Right lobe of liver (tissue), 6 donors: ENCODE measurements at regions of chr4 and their contacts with region 1.

Region 1: DNA sequence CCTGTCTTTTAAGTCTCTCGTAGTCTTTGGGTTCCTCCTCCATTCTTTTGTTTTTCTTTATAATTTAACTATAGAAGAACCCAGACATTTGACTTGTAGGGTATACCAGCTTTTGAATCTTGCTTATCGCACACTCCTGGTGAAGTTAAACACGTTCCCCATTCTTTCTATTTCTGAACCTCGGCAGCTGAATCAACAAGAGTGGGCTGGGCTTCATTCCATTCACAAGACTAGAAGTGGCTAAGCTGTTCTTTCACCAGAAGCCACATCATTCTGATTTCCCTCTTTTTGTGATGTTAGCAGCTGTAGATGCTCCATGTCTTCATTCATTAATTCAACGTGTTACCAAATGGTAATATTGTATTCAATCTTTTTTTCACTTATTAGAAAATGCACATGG is 167.9 kb downstream of the CORIN start:
- DNase-seq: no peak
- ATAC-seq: no peak
- H3K4me3 ChIP-seq: no peak overlapping the region
- H3K27ac ChIP-seq: no peak overlapping the region
- H3K4me1 ChIP-seq: no peaks in the 10 kb centered on the region
- H3K27me3 ChIP-seq: no peaks in the 10 kb centered on the region
- CTCF ChIP-seq: no peak
- POLR2A ChIP-seq: no peak

Region 2: GRCh38 chr4:47945930-47946726 is 276.2 kb after region 1 on chr4:
- intact Hi-C with region 1: loop called in 1 of 2 experiments (anchors 10 kb)
- DNase-seq: no peak
- ATAC-seq: no peak
- H3K4me3 ChIP-seq: no peak overlapping the region
- H3K27ac ChIP-seq: no peak overlapping the region
- H3K4me1 ChIP-seq: no peaks in the 10 kb centered on the region
- H3K27me3 ChIP-seq: no peaks in the 10 kb centered on the region
- CTCF ChIP-seq: no peak
- POLR2A ChIP-seq: no peak